ENCODE measurements at regions of chr9 and their contacts with region 1.

Region 1: DNA sequence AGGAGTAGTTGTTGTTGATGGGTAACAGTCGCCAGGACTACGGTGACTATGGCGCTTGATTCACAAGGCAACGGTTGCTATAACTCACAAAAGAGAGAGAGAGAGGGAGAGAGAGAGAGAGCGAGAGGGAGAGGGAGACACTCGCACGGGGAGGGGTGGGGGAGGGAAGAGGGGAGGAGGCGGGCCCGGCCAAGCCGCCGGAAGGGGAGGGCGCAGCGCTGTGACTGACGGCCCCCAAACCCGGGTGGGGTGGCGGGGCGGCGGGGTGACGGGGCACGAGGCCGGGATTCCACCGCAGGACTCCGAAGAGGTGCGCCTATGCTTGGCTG is at the start of gene RFX3:
- DNase-seq: peak; percentile 86 to 98 (median 93)
- ATAC-seq: peak; percentile 66
- H3K4me3 ChIP-seq: peak within 1 kb of the TSS; percentile 74 to 98
- H3K4me3 Mint-ChIP-seq: peak within 1 kb of the TSS; percentile 98
- H3K27ac ChIP-seq: peak within 1 kb of the TSS; percentile 99 to 100
- H3K27ac Mint-ChIP-seq: peak within 1 kb of the TSS; percentile 100
- H3K4me1 ChIP-seq: peaks cover 48% of the 10 kb centered on the region
- H3K4me1 Mint-ChIP-seq: peaks cover 65% of the 10 kb centered on the region
- H3K27me3 ChIP-seq: no peaks in the 10 kb centered on the region
- H3K27me3 Mint-ChIP-seq: no peaks in the 10 kb centered on the region
- CTCF ChIP-seq: no peak
- total RNA-seq, gene RFX3: 17.6 to 18.9 TPM

Region 2: DNA sequence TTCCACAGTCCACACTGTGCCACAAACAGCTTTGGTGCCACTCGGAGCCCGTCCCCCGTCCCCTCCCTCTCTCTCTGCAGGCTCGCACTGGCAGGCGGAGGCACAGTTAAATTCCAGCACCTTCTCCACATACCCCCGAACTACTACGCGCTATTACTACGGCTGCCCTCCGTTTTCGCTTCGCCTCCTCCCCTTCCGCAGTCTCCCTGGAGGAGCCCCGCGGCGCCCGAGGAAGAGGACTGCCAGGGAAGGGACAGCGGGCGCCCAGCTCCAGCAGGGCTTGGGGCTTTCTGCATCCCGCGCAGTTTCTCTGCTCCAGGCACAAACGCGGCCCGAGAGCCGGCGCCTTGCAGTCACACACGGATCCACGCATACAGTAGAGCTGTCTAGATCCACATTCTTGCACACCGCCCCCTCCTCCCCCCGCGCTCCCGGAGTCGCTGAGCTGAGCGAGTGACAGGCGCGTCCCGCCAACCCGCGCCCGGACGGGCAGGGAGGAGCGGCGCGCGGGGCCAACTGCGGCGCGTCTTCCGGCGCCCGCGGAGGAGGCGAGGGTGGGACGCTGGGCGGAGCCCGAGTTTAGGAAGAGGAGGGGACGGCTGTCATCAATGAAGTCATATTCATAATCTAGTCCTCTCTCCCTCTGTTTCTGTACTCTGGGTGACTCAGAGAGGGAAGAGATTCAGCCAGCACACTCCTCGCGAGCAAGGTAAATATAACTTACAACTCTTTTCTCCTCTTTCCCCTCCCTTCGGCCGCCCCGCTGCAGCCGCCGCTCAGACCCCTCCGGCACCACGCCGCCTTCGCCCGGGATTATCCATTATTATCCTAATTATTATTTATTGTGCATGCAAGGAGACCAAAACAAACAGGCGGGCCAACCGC is 1510.9 kb before region 1 on chr9 and contains the start of gene SMARCA2:
- CTCF ChIA-PET with region 1: no interaction called
- POLR2A ChIA-PET with region 1: interaction called, 3 read pairs
- intact Hi-C with region 1: loop called (anchors 5 kb)
- DNase-seq: peak; percentile 96 to 98 (median 97)
- ATAC-seq: peak; percentile 79
- H3K4me3 ChIP-seq: peak within 1 kb of the TSS; percentile 78 to 97
- H3K4me3 Mint-ChIP-seq: peak within 1 kb of the TSS; percentile 100
- H3K27ac ChIP-seq: peak within 1 kb of the TSS; percentile 91 to 94
- H3K27ac Mint-ChIP-seq: peak within 1 kb of the TSS; percentile 100
- H3K4me1 ChIP-seq: peaks cover 18% of the 10 kb centered on the region
- H3K4me1 Mint-ChIP-seq: peaks cover 35% of the 10 kb centered on the region
- H3K27me3 ChIP-seq: no peaks in the 10 kb centered on the region
- H3K27me3 Mint-ChIP-seq: no peaks in the 10 kb centered on the region
- CTCF ChIP-seq: no peak
- total RNA-seq, gene SMARCA2: 198 to 215 TPM

Region 3: GRCh38 chr9:3035579-3036332 is 490.0 kb before region 1 on chr9:
- CTCF ChIA-PET with region 1: no interaction called
- POLR2A ChIA-PET with region 1: no interaction called
- intact Hi-C with region 1: no loop called
- DNase-seq: no peak
- ATAC-seq: no peak
- H3K4me3 ChIP-seq: no peak overlapping the region
- H3K4me3 Mint-ChIP-seq: no peak overlapping the region
- H3K27ac ChIP-seq: no peak overlapping the region
- H3K27ac Mint-ChIP-seq: no peak overlapping the region
- H3K4me1 ChIP-seq: no peaks in the 10 kb centered on the region
- H3K4me1 Mint-ChIP-seq: no peaks in the 10 kb centered on the region
- H3K27me3 ChIP-seq: no peaks in the 10 kb centered on the region
- H3K27me3 Mint-ChIP-seq: no peaks in the 10 kb centered on the region
- CTCF ChIP-seq: no peak

Region 4: DNA sequence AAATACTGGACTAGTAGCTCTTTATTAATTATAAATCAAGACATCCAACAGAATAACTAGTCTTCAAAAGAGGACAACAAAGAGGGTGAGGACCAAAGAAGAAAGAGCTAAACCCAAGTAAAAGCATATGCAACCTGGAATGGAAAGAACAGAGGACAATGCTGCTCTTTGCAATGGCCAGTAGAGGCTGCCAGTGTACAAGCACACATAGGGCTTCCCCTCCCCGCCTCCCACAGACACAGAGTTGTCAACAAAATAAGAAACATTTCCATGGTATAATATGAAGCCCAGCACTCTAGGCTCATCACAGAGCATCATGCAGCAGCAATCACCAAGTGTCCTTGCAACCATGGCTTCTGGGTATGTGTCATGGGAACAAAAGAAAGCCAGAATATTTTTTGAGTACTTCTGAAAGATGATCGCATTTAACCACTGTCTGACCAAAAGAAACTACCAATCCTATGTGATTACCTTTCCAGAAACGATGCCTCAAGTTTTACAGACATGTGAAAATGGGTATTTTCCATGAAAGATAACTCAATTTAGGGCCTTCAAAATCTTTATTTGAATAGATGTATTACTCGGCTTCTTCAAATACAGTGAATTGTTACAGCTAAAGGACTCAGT is 58.1 kb before region 1 on chr9:
- CTCF ChIA-PET with region 1: interaction called, 4 read pairs
- POLR2A ChIA-PET with region 1: interaction called, 4 read pairs
- intact Hi-C with region 1: loop called in 1 of 2 experiments (anchors 2 kb)
- DNase-seq: peak; percentile 13 to 80 (median 62)
- ATAC-seq: peak; percentile 99
- H3K4me3 ChIP-seq: no peak overlapping the region
- H3K4me3 Mint-ChIP-seq: no peak overlapping the region
- H3K27ac ChIP-seq: no peak overlapping the region
- H3K27ac Mint-ChIP-seq: no peak overlapping the region
- H3K4me1 ChIP-seq: peaks cover 4% of the 10 kb centered on the region
- H3K4me1 Mint-ChIP-seq: peaks cover 10% of the 10 kb centered on the region
- H3K27me3 ChIP-seq: no peaks in the 10 kb centered on the region
- H3K27me3 Mint-ChIP-seq: no peaks in the 10 kb centered on the region
- CTCF ChIP-seq: peak; percentile 87

Region 5: DNA sequence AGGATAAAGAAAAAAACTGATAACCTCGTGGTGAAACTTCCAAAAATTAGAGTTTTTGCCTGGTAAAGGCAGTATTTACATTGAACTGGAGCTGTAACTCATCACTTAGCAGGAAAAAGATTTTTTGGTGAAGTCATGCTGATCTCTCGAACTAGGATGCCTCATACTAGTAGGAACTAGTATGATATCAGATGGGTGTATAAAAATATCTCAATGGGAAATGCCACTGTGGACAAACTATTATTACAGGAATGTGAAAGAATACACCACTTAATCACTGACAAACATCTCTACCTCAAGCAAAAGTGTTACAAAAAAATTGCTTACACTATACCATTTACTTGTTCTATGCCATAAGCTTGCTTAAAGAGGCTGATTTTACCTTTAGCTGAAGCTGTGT is 28.4 kb before region 1 on chr9:
- CTCF ChIA-PET with region 1: no interaction called
- POLR2A ChIA-PET with region 1: interaction called, 10 read pairs
- intact Hi-C with region 1: no loop called
- DNase-seq: no peak
- ATAC-seq: no peak
- H3K4me3 ChIP-seq: no peak overlapping the region
- H3K4me3 Mint-ChIP-seq: no peak overlapping the region
- H3K27ac ChIP-seq: no peak overlapping the region
- H3K27ac Mint-ChIP-seq: no peak overlapping the region
- H3K4me1 ChIP-seq: no peaks in the 10 kb centered on the region
- H3K4me1 Mint-ChIP-seq: peaks cover 19% of the 10 kb centered on the region
- H3K27me3 ChIP-seq: no peaks in the 10 kb centered on the region
- H3K27me3 Mint-ChIP-seq: no peaks in the 10 kb centered on the region
- CTCF ChIP-seq: no peak

Region 6: GRCh38 chr9:3647652-3648051 is 121.9 kb after region 1 on chr9:
- CTCF ChIA-PET with region 1: no interaction called
- POLR2A ChIA-PET with region 1: no interaction called
- intact Hi-C with region 1: loop called in 1 of 2 experiments (anchors 5 kb)
- DNase-seq: peak in 2 of 9 experiments; percentile 9 to 24
- ATAC-seq: no peak
- H3K4me3 ChIP-seq: no peak overlapping the region
- H3K4me3 Mint-ChIP-seq: no peak overlapping the region
- H3K27ac ChIP-seq: no peak overlapping the region
- H3K27ac Mint-ChIP-seq: no peak overlapping the region
- H3K4me1 ChIP-seq: no peaks in the 10 kb centered on the region
- H3K4me1 Mint-ChIP-seq: no peaks in the 10 kb centered on the region
- H3K27me3 ChIP-seq: no peaks in the 10 kb centered on the region
- H3K27me3 Mint-ChIP-seq: no peaks in the 10 kb centered on the region
- CTCF ChIP-seq: no peak

Region 7: DNA sequence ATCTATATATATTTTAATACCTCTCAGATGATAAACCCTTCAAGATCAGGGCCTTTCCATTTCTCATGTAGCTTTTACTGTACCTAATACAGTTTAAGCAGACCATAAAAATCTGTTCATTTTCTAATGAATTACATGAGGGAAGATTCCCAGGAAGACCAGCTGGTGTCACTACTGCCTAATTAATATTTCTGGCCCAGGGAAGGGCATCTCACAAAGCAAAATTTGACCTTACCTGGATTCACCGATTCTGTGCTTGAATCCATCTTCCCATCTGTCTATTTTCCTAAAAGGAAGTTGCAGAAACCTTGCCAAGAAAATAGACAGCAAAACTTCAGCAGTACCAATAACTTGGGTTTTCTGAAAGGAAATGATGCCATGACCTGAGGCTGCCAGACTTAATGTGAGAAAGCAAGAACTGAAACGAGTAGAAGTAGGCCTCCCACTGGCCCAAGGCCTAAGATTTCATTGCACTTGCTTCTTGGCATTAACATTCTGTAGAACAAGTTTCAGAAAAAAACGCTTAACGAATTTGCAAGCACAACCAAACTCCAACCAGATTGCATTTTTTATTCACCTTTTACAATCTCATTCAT is 857.0 kb after region 1 on chr9:
- CTCF ChIA-PET with region 1: no interaction called
- POLR2A ChIA-PET with region 1: no interaction called
- intact Hi-C with region 1: no loop called
- DNase-seq: peak in 3 of 9 experiments; percentile 20 to 60 (median 45)
- ATAC-seq: peak; percentile 42
- H3K4me3 ChIP-seq: no peak overlapping the region
- H3K4me3 Mint-ChIP-seq: no peak overlapping the region
- H3K27ac ChIP-seq: no peak overlapping the region
- H3K27ac Mint-ChIP-seq: no peak overlapping the region
- H3K4me1 ChIP-seq: no peaks in the 10 kb centered on the region
- H3K4me1 Mint-ChIP-seq: peaks cover 3% of the 10 kb centered on the region
- H3K27me3 ChIP-seq: peaks cover 0 to 2% of the 10 kb centered on the region in 2 experiments
- H3K27me3 Mint-ChIP-seq: no peaks in the 10 kb centered on the region
- CTCF ChIP-seq: peak; percentile 53

Region 8: GRCh38 chr9:4740638-4741364 is 1215.0 kb after region 1 on chr9 and contains the start of gene AK3:
- CTCF ChIA-PET with region 1: no interaction called
- POLR2A ChIA-PET with region 1: interaction called, 7 read pairs
- intact Hi-C with region 1: loop called in 1 of 2 experiments (anchors 2 kb)
- DNase-seq: peak; percentile 71 to 94 (median 86)
- ATAC-seq: peak; percentile 93
- H3K4me3 ChIP-seq: peak within 1 kb of the TSS; percentile 76 to 97
- H3K4me3 Mint-ChIP-seq: peak within 1 kb of the TSS; percentile 87
- H3K27ac ChIP-seq: peak within 1 kb of the TSS; percentile 70 to 86
- H3K27ac Mint-ChIP-seq: peak within 1 kb of the TSS; percentile 96
- H3K4me1 ChIP-seq: peaks cover 30% of the 10 kb centered on the region
- H3K4me1 Mint-ChIP-seq: peaks cover 37% of the 10 kb centered on the region
- H3K27me3 ChIP-seq: no peaks in the 10 kb centered on the region
- H3K27me3 Mint-ChIP-seq: no peaks in the 10 kb centered on the region
- CTCF ChIP-seq: no peak
- total RNA-seq, gene AK3: 15.2 to 18.8 TPM

Measured in CD8-positive, alpha-beta T cell (primary cell).